GM10248 (cell line): ENCODE measurements at regions of chr11 and their contacts with region 1.

Region 1: GRCh38 chr11:61792310-61793085 is at the starts of genes FEN1 and TMEM258:
- DNase-seq: peak; percentile 93
- CTCF ChIP-seq: no peak

Region 2: DNA sequence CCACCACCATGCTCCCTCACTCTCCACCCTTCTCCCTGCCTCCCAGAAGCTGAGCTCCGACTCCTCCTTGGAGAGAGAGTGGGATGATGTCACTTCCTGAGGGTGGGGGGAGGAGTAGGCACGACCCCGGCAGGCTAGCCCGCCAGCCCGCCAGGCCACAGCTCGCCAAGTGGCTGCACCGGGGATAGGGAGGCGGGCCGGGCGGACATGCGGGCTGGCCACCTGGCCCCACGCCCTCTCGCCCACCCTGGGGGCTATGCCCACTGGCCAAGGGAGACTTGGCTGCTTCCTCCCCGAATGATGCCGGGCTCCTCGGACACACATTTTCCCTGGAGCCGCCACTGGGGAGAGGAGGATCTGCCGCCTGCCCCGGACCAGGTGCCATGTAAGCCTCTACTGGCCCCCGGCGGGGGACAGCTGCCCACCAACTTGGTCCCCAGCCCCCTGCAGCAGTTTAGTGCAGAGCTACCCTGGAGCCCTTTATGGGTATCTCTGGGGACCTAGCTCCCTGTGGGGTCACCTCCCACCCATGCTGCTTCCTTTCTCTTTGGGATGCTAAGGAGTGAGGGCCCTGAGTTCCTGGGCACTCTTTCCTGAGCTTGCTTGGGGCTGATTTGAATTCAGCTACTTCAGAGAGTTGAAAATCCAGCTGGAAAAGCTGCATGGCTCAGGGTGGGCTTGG is 73.7 kb before region 1 on chr11:
- CTCF ChIA-PET with region 1: no interaction called
- POLR2A ChIA-PET with region 1: no interaction called
- DNase-seq: no peak
- CTCF ChIP-seq: no peak

Region 3: GRCh38 chr11:61756452-61757212 is 35.9 kb before region 1 on chr11:
- CTCF ChIA-PET with region 1: interaction called, 91 read pairs
- POLR2A ChIA-PET with region 1: no interaction called
- DNase-seq: peak; percentile 89
- CTCF ChIP-seq: no peak

Region 4: DNA sequence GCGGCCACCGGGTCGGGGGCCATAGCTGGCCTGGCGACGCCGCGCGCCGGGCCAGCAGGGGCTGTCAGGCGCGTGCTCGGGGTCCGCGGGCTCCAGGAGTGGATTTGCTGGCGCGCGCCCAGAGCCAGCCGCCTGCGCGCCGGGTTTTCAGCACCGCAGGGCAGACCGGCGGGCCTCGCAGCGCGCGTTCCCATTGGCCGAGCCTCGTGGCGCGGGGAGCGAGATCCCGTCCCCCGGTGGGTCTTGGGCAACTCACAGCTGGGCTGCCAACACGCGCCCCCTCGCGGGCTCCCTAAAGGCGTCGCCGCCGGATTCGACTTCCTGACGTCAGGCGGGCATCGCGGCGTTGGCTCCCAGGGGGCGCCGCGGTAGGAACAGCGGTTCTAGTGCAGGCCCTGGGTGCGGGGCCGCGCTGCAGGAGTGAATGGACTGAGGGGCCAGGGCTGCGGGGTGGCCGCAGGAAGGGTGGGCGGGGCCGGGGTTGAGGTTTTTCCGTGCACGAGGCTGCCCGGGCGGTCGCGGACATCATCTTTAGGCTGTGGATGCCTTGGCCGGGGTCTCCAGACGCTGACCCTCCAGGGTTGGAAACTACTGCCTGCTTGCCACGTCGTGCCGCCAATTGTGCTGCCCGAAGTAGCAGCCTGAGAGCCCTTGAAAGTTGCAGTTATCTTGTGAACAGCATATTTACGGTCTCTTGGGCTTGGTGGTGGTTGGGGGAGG is 24.4 kb after region 1 on chr11 and contains the start of gene FADS1:
- CTCF ChIA-PET with region 1: interaction called, 103 read pairs
- POLR2A ChIA-PET with region 1: interaction called, 9 read pairs
- DNase-seq: peak; percentile 85
- CTCF ChIP-seq: peak; percentile 64

Region 5: GRCh38 chr11:61871158-61871597 is 78.7 kb after region 1 on chr11:
- CTCF ChIA-PET with region 1: interaction called, 13 read pairs
- POLR2A ChIA-PET with region 1: no interaction called
- DNase-seq: peak; percentile 87
- CTCF ChIP-seq: peak; percentile 93

Region 6: DNA sequence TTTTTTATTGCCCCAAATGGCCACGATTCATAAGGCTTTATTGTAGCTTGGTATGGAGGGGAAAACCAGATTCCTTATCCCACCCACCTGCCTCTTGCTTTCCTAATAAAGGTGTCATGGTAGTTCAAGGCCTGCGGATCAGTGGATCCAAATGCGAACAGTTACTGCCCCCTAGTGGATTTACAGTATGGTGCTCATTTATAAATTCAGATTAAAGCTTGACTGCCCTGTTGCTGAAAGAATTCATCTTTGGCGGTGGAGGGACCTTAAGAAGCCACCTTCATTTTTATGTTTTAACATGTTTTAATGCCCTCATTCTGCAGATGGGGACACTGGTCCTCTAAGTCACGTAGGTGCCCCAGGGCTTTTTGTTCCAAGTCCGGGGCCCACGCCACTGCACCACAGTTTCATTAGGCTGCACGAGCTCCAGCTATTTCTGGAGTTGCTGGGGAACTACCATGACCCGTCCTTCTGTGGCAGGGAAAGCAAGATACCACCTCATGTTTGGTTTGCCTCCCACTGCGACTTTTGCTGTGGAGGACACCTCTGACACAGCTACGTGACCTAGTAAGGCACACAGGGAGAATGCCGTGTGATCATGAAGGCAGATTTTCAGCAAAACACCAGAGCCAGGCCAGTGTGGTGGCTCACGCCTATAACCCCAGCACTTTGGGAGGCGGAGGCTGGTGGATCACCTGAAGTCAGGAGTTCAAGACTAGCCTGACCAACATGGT is 315.7 kb after region 1 on chr11:
- CTCF ChIA-PET with region 1: interaction called, 61 read pairs
- POLR2A ChIA-PET with region 1: no interaction called
- DNase-seq: peak; percentile 56
- CTCF ChIP-seq: peak; percentile 76